HepG2 (cell line): ENCODE measurements at regions of chr2 and their contacts with region 1.

Region 1: DNA sequence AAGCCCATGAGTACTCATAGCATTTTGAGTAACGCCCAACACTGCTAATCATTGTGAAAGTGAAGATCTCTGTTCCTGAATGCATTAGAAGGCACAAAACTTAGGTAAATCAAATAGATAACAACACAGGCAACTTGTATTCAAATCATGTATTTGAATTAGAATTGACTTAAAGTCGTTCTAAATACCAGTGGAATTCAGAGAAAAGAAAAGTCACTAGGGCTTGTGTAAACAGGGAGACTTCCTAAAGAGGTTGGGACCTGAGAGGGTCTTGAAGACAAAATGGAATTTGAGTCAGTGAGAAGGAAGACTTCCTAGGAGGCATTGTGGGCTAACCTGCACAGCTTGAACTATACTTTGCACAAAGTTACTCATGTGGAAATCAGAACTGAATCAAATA is 127.2 kb downstream of the CTNNA2 start:
- DNase-seq: no peak
- ATAC-seq: no peak
- H3K4me3 ChIP-seq: no peak overlapping the region
- H3K27ac ChIP-seq: no peak overlapping the region
- H3K4me1 ChIP-seq: no peaks in the 10 kb centered on the region
- H3K27me3 ChIP-seq: no peaks in the 10 kb centered on the region
- CTCF ChIP-seq: no peak
- EP300 ChIP-seq: no peak
- POLR2A ChIP-seq: no peak
- RAD21 ChIP-seq: no peak

Region 2: DNA sequence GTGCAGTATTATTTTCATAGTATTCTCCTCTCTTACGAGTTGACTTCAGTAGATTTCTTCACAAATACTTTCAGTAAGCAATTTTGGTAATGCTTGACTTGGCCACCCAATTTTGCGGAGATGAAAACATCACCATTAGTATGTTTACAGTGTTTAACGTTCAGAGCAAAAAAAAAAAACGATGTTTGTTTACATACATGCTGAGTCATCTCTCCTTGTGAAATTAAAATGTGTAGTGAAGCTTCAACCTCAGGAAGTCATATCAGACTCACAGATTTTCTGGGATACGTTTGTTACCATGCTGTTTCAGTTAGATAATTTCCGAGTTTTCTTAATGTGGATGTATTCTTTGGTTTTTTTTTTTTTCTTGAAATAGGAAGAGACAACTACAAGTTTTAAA is 27.0 kb before region 1 on chr2:
- CTCF ChIA-PET with region 1: no interaction called
- POLR2A ChIA-PET with region 1: no interaction called
- in situ Hi-C with region 1: no loop called
- intact Hi-C with region 1: no loop called
- DNase-seq: no peak
- ATAC-seq: no peak
- H3K4me3 ChIP-seq: no peak overlapping the region
- H3K27ac ChIP-seq: no peak overlapping the region
- H3K4me1 ChIP-seq: no peaks in the 10 kb centered on the region
- H3K27me3 ChIP-seq: no peaks in the 10 kb centered on the region
- CTCF ChIP-seq: no peak
- EP300 ChIP-seq: no peak
- POLR2A ChIP-seq: no peak
- RAD21 ChIP-seq: no peak

Region 3: DNA sequence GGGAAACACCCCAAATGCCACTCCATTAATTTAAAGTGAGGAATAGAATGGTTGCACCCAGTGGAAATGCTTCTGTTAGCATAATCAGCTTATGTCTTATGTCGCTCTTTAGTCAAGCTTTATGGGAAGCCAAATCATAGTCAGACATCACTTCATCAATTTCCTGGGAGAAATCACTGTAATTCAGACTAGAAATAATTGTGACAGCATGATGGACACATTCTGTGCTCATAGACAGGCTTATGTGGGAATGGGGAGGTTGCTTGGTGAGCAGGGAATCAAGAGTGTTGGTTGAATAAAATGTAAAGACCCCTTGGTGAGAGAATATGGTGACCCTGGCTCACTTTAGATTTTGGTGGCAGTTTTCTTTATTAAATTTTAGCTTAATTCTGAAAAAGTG is 46.9 kb after region 1 on chr2:
- CTCF ChIA-PET with region 1: no interaction called
- POLR2A ChIA-PET with region 1: no interaction called
- in situ Hi-C with region 1: no loop called
- intact Hi-C with region 1: no loop called
- DNase-seq: no peak
- ATAC-seq: no peak
- H3K4me3 ChIP-seq: no peak overlapping the region
- H3K27ac ChIP-seq: no peak overlapping the region
- H3K4me1 ChIP-seq: no peaks in the 10 kb centered on the region
- H3K27me3 ChIP-seq: peaks cover 0 to 1% of the 10 kb centered on the region in 2 experiments; a peak in 1 of 5 replicates
- CTCF ChIP-seq: no peak
- EP300 ChIP-seq: no peak
- POLR2A ChIP-seq: no peak
- RAD21 ChIP-seq: no peak

Region 4: DNA sequence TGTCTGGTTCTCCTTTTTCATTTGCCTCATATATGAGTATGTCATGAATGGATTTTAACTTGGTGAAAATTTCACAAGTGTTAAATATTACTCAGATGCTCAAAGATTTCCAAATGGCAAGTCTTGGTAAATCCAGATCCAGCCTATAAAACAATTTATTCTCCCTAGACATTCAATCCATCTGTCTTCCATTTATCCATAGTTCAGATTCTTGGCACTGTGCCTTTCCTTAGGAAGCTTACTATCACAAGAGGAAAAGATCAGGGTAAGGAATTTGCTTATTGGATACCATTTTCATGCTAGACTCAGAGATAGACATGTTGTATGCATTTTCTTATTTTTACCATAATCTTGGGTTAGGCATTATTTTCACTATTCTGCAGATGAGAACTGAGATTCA is 737.1 kb after region 1 on chr2:
- CTCF ChIA-PET with region 1: no interaction called
- POLR2A ChIA-PET with region 1: no interaction called
- in situ Hi-C with region 1: no loop called
- intact Hi-C with region 1: loop called (anchors 10 kb)
- DNase-seq: no peak
- ATAC-seq: no peak
- H3K4me3 ChIP-seq: no peak overlapping the region
- H3K27ac ChIP-seq: no peak overlapping the region
- H3K4me1 ChIP-seq: no peaks in the 10 kb centered on the region
- H3K27me3 ChIP-seq: no peaks in the 10 kb centered on the region
- CTCF ChIP-seq: no peak
- EP300 ChIP-seq: no peak
- POLR2A ChIP-seq: no peak
- RAD21 ChIP-seq: no peak